Heart right ventricle (tissue), 16 donors: ENCODE measurements at regions of chr22 and their contacts with region 1.

Region 1: GRCh38 chr22:32660292-32660691 is 141.2 kb upstream of the TIMP3 start:
- DNase-seq: peak; percentile 70 to 71
- ATAC-seq: peak; percentile 67 to 86 (median 72)
- H3K4me3 ChIP-seq: no peak overlapping the region
- H3K27ac ChIP-seq: peak overlapping the region in 2 of 10 donors; percentile 14 to 59
- H3K4me1 ChIP-seq: peaks cover 0 to 21% (median 7%) of the 10 kb centered on the region in 9 donors
- H3K27me3 ChIP-seq: no peaks in the 10 kb centered on the region
- CTCF ChIP-seq: peak; percentile 68 to 87 (median 80)

Region 2: GRCh38 chr22:30968924-30969539 is 1691.3 kb before region 1 on chr22 and contains the start of gene TUG1:
- intact Hi-C with region 1: no loop called
- DNase-seq: peak; percentile 98 to 99
- ATAC-seq: peak; percentile 97 to 100 (median 98)
- H3K4me3 ChIP-seq: peak within 1 kb of the TSS; percentile 76 to 91 (median 84)
- H3K27ac ChIP-seq: peak within 1 kb of the TSS; percentile 88 to 99 (median 96)
- H3K4me1 ChIP-seq: peaks cover 4 to 59% (median 39%) of the 10 kb centered on the region in 9 donors
- H3K27me3 ChIP-seq: no peaks in the 10 kb centered on the region
- CTCF ChIP-seq: no peak
- total RNA-seq, gene TUG1: 37.7 to 48.4 (median 44.2) TPM

Region 3: DNA sequence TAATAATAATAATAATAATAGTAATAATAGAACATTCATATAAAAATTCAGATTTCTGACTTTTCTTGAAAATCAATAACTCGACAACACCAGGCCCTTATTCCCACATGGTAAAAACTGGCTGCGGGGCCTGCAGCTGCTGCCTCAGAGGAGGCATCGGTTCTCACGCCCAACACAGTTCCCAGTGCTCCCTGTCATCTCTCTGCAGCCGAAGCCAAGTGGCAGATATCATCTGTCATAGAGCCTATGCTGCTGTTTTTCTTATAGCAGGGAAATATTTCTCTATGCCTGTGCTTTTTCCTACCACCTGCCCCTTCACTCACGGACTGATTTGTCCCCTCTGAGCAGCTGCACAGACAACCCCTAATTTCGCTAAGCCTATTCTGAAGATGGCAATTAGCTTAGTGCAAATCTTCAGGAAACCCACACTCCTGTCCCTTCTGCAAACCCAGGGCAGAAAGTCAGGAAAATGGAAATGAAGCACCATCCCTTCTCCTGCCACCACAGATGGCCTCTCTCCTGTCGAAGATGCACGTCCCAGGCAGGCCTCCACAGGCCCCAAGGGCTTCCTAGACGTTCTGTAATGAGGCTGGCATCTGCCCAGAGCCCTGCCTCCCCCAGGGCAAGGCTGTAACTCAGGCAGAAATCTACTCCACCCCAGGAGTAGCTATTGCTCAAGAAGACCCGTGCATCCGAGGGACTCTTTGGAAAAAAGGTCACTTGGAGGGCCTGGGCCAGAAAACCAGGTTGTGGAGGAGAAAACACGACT is 331.2 kb after region 1 on chr22:
- intact Hi-C with region 1: loop called in 9 of 10 experiments (anchors 1 to 5 kb)
- DNase-seq: peak in 1 of 2 donors; percentile 52
- ATAC-seq: peak in 2 of 8 donors; percentile 48 to 63
- H3K4me3 ChIP-seq: no peak overlapping the region
- H3K27ac ChIP-seq: no peak overlapping the region
- H3K4me1 ChIP-seq: peaks cover 0 to 17% (median 7%) of the 10 kb centered on the region in 9 donors
- H3K27me3 ChIP-seq: no peaks in the 10 kb centered on the region
- CTCF ChIP-seq: no peak